Ovary (tissue), 10 donors: ENCODE measurements at regions of chr2 and their contacts with region 1.

Region 1: DNA sequence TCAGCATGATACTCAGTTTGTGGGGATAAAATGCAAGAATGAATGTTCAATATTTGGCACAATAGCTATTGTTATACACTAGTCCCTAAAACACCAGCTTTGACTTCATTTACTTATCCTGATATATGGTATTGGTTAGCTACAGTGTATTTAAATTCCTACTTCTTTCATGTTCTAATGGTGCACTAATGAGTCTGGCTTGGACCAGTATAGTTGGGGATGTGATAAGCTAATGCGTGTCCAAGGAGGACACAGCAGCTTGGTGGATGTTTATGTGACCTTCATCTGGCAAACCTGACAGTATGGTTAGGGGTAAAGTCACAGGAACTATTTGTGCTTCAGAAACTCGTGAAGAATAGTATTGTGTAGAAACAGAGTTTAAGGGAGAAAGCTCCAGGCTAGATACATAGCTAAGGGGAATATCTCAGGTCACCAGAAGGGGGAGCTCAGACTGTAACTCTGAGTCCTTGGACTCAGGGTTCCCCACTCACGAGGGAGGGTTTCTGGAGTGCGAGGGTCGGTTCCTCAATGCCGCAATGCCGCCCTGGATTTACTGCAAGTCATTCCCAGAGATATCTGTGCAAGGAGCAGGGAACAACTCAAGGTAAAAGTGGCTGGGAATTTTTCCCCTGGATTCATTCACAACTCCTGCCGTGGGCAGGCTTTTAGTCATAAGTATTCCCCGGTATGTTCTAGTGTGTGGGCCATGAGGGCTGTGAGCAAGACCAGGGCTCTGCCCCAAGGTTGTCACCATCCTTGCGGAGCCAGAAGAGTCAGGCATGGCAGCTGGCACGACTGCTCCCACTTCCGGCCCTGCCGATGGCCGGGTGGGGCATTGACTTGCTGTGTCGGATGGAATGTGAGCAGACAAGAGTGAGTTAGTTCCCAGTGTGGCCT is 14.5 kb downstream of the IL1R2 start:
- DNase-seq: peak in 3 of 5 donors; percentile 48 to 61 (median 48)
- H3K4me3 ChIP-seq: no peak overlapping the region
- H3K27ac ChIP-seq: peak overlapping the region in 1 of 2 donors; percentile 37
- H3K4me1 ChIP-seq: peaks cover 11% of the 10 kb centered on the region
- H3K27me3 ChIP-seq: no peaks in the 10 kb centered on the region
- CTCF ChIP-seq: peak in 2 of 3 donors; percentile 36 to 40
- EP300 ChIP-seq: no peak
- POLR2A ChIP-seq: no peak

Region 2: GRCh38 chr2:101860157-101860556 is 146.1 kb before region 1 on chr2:
- intact Hi-C with region 1: loop called in 1 of 4 experiments (anchors 10 kb)
- DNase-seq: no peak
- H3K4me3 ChIP-seq: no peak overlapping the region
- H3K27ac ChIP-seq: no peak overlapping the region
- H3K4me1 ChIP-seq: peaks cover 3% of the 10 kb centered on the region
- H3K27me3 ChIP-seq: no peaks in the 10 kb centered on the region
- CTCF ChIP-seq: no peak
- EP300 ChIP-seq: no peak
- POLR2A ChIP-seq: no peak

Region 3: DNA sequence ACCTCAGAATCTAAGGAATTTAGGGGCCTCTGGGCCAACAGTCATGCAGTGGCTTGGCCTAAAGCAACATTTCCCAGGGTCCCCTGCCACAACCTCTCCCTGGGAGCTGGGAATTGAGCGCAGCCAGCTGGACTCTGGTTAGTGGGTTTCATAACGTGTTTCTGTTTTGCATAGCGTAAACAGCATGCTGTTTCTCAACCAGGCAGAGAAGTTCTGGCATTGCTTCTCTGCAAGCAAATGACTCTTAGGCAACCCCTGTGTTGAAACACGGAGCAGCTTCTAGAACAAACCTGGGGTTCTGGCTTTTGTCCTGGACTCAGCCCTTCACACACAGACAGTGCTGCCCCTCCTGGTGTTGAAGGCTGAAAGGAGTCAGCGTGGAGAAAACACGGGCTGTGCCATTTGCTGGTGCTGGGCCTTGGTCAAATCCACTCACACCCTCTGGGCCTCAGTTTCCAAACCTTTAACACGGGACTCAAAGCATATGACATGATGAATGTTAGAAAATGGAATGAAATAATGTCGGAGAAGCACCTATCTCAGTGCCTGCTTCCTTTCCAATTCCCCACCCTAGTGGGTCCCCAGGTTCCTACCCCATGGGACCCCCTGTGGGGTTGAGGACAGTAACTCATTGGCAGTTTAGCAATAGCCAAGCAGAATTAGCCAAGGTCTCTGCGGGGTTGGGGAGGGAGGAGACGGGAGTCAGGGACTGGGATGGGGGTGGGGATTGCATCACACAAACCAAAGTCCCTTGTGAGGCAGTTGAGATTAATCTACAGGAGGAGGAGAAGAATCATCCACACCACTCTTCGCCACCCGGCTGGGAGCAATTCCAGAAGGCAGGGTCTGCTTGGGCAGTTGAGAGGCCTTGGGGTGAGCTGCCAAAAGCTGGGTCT is 44.7 kb before region 1 on chr2:
- intact Hi-C with region 1: no loop called
- DNase-seq: peak; percentile 85 to 94 (median 89)
- H3K4me3 ChIP-seq: no peak overlapping the region
- H3K27ac ChIP-seq: peak overlapping the region; percentile 79 to 90
- H3K4me1 ChIP-seq: peaks cover 19% of the 10 kb centered on the region
- H3K27me3 ChIP-seq: no peaks in the 10 kb centered on the region
- CTCF ChIP-seq: peak in 2 of 3 donors; percentile 36 to 50
- EP300 ChIP-seq: peak; percentile 93
- POLR2A ChIP-seq: no peak

Region 4: DNA sequence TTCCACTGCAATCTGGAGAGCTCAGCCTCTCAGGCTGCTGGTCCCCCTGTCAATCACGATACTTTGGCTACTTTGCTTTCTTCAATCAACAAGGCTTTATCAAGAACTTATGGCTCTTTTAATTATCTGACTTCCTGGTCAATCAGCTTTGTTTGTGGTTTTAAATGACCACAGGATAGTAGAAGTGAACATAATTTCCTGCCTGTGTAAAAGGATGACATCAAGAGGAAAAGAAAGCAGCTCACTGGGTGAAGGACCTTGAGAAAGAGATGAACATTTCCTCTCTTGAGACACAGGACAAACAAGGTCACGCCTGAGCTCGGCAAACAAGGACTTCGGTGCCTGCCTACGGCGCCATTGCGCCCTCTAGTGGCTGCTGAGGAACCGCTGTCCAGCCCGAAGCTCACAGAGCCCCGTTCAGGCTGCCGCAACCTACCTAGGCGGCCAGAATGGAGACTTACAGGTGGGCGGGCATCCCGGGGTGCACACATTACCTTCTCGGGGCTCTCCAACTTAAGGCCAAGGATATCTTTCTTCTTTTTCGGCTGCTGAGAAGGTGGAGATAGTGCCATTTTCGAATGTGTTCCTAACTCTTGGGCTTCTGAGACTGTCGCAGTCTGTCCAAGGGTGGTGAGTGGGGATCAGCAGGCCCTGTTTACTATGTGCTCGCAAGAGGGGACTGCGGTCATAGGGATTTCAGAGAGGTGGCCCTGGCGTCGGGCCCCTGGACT is 234.6 kb after region 1 on chr2:
- intact Hi-C with region 1: loop called in 1 of 4 experiments (anchors 5 kb)
- DNase-seq: peak; percentile 88 to 94 (median 93)
- H3K4me3 ChIP-seq: no peak overlapping the region
- H3K27ac ChIP-seq: peak overlapping the region in 1 of 2 donors; percentile 25
- H3K4me1 ChIP-seq: peaks cover 2% of the 10 kb centered on the region
- H3K27me3 ChIP-seq: no peaks in the 10 kb centered on the region
- CTCF ChIP-seq: peak; percentile 95 to 99 (median 97)
- EP300 ChIP-seq: no peak
- POLR2A ChIP-seq: no peak

Region 5: DNA sequence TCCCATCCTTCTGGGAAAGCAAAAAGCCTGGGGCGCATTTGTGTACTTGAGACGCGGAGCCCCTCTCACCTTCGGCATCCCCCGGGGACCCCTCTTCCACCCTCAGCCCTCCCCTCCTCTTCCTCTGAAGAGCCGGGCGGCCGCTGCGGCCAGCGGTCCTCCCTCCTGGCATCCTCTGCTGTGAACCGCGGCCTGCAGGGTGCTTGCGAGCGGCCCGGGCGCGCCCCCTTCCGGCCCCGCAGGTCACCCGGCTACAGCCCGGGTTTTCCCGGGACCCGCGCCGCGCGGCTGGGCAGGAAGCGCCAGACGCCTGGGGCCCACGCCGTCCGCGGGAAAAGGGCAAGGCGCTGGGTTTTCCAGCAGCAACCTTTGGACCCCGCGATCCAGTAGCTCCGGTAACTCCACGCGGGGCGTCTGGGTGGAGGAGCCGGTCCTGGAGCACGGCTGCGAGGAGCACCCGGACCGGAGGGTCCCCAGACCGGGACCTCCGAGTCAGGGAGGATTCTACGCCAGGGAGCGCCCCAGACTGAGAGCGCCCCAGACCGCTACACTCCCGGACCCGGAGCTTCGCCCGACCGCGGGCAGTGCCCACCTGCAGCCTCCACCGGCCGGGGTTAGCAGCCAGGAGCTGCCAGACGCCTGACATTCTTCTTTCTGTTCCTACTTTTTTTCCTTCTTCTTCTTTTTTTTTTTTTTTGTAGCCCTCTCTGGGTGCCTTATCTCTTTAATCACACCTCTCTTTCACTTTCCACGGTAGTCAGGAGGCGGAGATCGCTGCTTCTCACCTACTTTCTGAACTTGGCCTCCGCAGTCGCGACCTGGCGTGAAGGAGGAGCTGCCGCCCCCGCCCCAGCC is 349.5 kb after region 1 on chr2 and contains the start of gene IL18R1:
- intact Hi-C with region 1: loop called in 1 of 4 experiments (anchors 10 kb)
- DNase-seq: peak; percentile 66 to 84 (median 73)
- H3K4me3 ChIP-seq: peak within 1 kb of the TSS; percentile 69
- H3K27ac ChIP-seq: peak within 1 kb of the TSS; percentile 17 to 28
- H3K4me1 ChIP-seq: no peaks in the 10 kb centered on the region
- H3K27me3 ChIP-seq: no peaks in the 10 kb centered on the region
- CTCF ChIP-seq: peak; percentile 43 to 67 (median 61)
- EP300 ChIP-seq: no peak
- POLR2A ChIP-seq: no peak
- total RNA-seq, gene IL18R1: 0.83 to 3.1 (median 1.7) TPM